ENCODE measurements at regions of chr6 and their contacts with region 1.

Region 1: DNA sequence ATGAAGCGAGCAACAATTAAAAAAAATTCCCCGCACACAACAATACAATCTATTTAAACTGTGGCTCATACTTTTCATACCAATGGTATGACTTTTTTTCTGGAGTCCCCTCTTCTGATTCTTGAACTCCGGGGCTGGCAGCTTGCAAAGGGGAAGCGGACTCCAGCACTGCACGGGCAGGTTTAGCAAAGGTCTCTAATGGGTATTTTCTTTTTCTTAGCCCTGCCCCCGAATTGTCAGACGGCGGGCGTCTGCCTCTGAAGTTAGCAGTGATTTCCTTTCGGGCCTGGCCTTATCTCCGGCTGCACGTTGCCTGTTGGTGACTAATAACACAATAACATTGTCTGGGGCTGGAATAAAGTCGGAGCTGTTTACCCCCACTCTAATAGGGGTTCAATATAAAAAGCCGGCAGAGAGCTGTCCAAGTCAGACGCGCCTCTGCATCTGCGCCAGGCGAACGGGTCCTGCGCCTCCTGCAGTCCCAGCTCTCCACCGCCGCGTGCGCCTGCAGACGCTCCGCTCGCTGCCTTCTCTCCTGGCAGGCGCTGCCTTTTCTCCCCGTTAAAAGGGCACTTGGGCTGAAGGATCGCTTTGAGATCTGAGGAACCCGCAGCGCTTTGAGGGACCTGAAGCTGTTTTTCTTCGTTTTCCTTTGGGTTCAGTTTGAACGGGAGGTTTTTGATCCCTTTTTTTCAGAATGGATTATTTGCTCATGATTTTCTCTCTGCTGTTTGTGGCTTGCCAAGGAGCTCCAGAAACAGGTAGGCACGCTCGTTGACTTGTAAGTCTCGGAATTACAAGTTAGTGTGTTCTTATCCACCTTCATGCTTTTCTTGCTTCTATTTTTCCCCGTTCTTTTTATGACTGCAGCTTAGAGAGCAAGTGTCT is at the start of gene EDN1:
- H3K4me3 ChIP-seq: peak within 1 kb of the TSS; percentile 50
- H3K27ac ChIP-seq: no peak within 1 kb of the TSS; the same call in 1 of the 2 replicates
- H3K4me1 ChIP-seq: peaks cover 9% of the 10 kb centered on the region
- CTCF ChIP-seq: peak; percentile 14; the same call in 1 of the 2 replicates

Region 2: DNA sequence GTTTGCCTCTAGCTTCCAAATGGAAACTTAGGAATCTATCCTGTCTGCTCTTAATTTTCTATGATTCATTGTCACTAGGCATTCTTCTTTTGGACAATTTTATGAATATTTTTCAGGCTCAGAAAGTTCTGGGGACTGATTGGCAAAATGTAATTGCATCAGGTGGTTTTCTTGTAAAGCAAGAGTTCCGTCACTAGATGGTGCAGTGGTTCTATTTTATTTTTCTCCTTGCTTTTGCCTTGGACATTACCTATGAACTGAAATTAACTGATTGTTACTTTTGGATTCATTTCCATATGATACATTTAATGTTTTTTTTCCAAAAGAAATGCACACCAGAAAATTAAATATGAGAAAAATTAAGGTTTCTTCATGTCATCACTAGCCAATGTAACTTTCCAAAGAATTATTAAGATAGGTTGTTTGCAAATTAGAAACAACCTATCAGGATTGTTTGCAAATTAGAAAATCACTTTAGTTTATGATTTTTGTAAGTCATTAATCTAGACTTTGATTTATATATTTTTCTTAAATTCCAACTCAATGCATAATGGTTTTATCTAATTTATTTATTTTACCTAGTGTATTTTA is 704.7 kb before region 1 on chr6:
- CTCF ChIA-PET with region 1: interaction called, 18 read pairs
- POLR2A ChIA-PET with region 1: no interaction called
- H3K4me3 ChIP-seq: no peak overlapping the region
- H3K27ac ChIP-seq: no peak overlapping the region
- H3K4me1 ChIP-seq: no peaks in the 10 kb centered on the region
- CTCF ChIP-seq: peak; percentile 53; the same call in 1 of the 2 replicates

Region 3: DNA sequence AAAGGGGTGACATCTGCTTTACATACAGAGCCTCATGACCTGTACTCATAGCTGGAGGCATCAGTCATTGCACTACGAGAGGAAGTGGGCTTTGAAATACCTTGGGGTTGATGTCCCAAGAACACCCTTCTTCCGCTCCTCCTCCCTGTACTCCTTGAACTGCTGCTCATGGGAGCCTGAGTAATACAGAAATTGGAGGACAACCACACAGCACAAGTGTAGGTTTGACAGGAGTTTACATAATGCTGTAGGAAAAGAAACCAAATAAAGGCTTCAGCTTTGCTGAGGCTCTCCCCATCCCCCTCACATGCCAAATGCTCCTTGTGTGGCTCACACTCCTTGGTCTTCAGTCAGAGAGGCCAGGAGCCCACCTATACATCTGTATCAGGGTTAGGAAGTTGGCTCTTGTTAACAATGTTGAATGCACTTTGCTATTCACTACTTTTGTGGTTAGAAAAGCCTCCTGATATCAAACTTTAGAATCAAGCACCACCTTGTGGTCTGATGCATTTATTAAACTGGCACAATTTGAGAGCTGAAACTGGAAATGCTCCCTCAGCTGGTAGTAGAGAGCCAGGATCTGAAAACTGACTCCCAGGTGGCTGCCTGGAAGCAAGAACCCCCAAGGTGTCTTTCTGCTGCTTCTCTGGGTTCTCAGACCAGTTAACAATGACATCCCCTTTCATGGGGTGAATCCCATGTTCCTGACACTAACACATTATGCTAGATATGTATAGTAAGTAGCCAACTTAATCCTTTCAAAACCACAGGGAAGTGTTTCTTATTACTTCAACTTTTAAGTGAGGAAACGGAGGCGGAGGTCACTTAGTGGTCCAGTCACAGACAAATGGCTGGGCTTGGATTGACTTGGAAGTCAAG is 56.2 kb before region 1 on chr6:
- CTCF ChIA-PET with region 1: interaction called, 19 read pairs
- POLR2A ChIA-PET with region 1: interaction called, 3 read pairs
- H3K4me3 ChIP-seq: no peak overlapping the region
- H3K27ac ChIP-seq: no peak overlapping the region
- H3K4me1 ChIP-seq: no peaks in the 10 kb centered on the region
- CTCF ChIP-seq: peak; percentile 80

Region 4: DNA sequence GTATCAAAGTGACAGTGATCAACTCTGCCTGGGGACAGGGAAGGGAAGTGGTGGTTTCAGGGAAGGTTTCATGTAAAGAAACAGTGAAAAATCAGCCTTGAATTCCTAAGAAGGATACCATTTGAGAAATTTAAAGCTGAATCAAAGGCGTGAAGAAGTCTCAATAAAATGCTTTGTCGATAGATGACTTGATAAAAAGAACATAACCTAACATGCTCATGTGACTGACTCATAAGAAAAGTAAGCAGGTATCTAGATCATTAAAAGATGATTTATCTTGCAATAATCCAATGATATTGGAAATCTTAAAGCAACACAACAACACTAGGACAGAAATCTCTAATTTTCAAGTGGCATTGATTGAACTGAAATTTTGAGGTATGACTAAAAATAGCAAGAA is 14.3 kb after region 1 on chr6:
- CTCF ChIA-PET with region 1: interaction called, 16 read pairs
- POLR2A ChIA-PET with region 1: interaction called, 8 read pairs
- H3K4me3 ChIP-seq: no peak overlapping the region
- H3K27ac ChIP-seq: no peak overlapping the region
- H3K4me1 ChIP-seq: no peaks in the 10 kb centered on the region
- CTCF ChIP-seq: no peak

Region 5: DNA sequence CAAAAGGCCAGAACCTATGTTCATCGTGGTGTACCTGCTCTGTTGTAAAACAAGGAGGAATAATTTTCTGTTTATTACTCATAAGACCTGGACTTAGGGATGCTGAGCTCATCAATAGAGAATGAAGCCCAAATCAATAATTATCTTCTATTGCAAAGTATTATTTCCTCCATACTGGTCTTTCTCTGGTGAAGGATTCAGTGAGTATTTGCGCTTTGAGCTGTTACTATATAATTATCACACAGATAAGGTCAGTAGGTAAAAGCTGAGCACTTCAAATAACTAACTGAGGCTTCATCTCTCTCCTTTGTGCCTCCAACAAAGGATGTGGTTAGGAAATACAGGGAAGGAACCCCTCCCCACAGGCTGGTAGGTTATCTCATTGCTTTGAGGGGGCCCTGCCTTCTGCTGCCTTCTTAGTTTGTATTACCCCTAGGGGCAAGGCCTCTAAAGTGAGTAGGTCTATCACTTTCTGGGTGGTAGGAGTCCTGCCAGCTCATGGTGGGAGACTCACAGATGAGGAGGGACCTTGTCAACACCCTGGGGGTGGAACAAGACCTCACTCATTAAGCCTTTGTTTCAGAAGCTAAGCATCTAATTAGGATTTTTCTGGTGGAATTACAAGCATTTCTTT is 34.5 kb after region 1 on chr6:
- CTCF ChIA-PET with region 1: interaction called, 14 read pairs
- POLR2A ChIA-PET with region 1: interaction called, 10 read pairs
- H3K4me3 ChIP-seq: no peak overlapping the region
- H3K27ac ChIP-seq: no peak overlapping the region
- H3K4me1 ChIP-seq: peaks cover 4% of the 10 kb centered on the region; the same call in 1 of the 2 replicates
- CTCF ChIP-seq: no peak

Region 6: GRCh38 chr6:12504319-12504966 is 214.3 kb after region 1 on chr6:
- CTCF ChIA-PET with region 1: interaction called, 44 read pairs
- POLR2A ChIA-PET with region 1: no interaction called
- H3K4me3 ChIP-seq: no peak overlapping the region
- H3K27ac ChIP-seq: no peak overlapping the region
- H3K4me1 ChIP-seq: no peaks in the 10 kb centered on the region
- CTCF ChIP-seq: no peak